OCI-LY7 (cell line): ENCODE measurements at regions of chr1 and their contacts with region 1.

Region 1: DNA sequence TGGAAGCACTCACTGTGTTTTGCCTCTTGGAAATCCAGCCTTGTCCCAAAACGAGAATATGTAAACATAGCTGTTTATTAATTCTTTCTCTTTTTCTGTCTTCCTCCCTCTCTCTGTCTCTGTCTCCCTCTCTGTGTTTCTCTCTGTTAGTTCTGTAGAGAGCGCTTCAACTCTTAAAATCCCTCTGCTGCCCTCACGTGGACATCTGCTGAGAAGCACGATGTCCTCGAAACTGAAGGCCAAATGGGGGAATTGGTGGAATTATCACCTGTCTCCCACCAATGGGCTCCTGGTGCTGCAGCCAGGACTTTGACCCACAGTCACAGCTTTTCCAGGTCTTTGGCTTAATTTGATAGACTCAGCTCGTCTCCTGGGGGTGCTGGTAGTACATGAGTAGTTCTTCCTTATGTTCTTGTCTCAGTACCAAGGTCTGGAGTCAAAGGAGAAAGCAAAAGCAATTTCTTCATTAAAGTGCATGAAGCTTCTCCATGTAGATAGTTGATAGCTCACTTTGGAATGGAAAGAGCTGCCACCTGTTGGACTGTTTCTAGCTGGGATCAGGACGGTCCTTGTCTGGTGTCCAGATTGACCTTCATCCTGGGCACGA is 5.5 kb upstream of the GBP6 start:
- DNase-seq: peak; percentile 70
- H3K4me3 ChIP-seq: no peak overlapping the region
- H3K27ac ChIP-seq: no peak overlapping the region
- H3K4me1 ChIP-seq: no peaks in the 10 kb centered on the region
- CTCF ChIP-seq: peak; percentile 86

Region 2: GRCh38 chr1:88998716-88999115 is 359.7 kb before region 1 on chr1:
- CTCF ChIA-PET with region 1: no interaction called
- POLR2A ChIA-PET with region 1: no interaction called
- intact Hi-C with region 1: loop called (anchors 1 kb)
- DNase-seq: peak; percentile 76
- H3K4me3 ChIP-seq: no peak overlapping the region
- H3K27ac ChIP-seq: no peak overlapping the region
- H3K4me1 ChIP-seq: peaks cover 7% of the 10 kb centered on the region
- CTCF ChIP-seq: peak; percentile 77

Region 3: DNA sequence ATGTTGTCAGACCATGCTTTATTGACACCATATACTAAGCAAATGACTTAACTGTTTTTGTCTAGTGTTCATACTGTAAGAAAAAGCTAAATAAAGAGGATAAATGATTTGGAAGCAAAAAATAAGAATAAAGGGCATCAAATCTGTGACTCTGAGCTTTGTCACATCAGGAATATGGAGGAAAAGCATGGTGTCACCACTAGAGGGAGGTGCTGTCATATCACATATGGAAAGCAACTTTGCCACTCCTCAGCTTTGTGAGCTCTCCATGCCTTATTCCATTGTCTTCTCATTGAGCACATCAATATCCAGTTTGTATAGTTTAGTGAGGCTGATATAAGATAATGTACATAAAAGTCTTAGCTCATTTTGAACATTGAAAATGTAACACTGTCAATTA is 272.6 kb before region 1 on chr1:
- CTCF ChIA-PET with region 1: no interaction called
- POLR2A ChIA-PET with region 1: interaction called, 4 read pairs
- intact Hi-C with region 1: loop called (anchors 5 kb)
- DNase-seq: peak; percentile 16
- H3K4me3 ChIP-seq: no peak overlapping the region
- H3K27ac ChIP-seq: no peak overlapping the region
- H3K4me1 ChIP-seq: no peaks in the 10 kb centered on the region
- CTCF ChIP-seq: peak; percentile 66